ENCODE measurements at regions of chr9 and their contacts with region 1.

Region 1: GRCh38 chr9:132240753-132241493 is 79.1 kb downstream of the NTNG2 start:
- DNase-seq: peak; percentile 77
- ATAC-seq: peak; percentile 76
- H3K4me3 ChIP-seq: peak overlapping the region; percentile 65 to 73 (median 66); a peak in 4 of 6 replicates
- H3K27ac ChIP-seq: no peak overlapping the region
- H3K4me1 ChIP-seq: peaks cover 16% of the 10 kb centered on the region
- H3K27me3 ChIP-seq: peaks cover 16 to 70% of the 10 kb centered on the region in 2 experiments; a peak in 4 of 5 replicates
- CTCF ChIP-seq: 0 out of 2 replicates have a peak, but pooled peaks have one; percentile 1
- EP300 ChIP-seq: no peak
- POLR2A ChIP-seq: no peak
- RAD21 ChIP-seq: no peak

Region 2: DNA sequence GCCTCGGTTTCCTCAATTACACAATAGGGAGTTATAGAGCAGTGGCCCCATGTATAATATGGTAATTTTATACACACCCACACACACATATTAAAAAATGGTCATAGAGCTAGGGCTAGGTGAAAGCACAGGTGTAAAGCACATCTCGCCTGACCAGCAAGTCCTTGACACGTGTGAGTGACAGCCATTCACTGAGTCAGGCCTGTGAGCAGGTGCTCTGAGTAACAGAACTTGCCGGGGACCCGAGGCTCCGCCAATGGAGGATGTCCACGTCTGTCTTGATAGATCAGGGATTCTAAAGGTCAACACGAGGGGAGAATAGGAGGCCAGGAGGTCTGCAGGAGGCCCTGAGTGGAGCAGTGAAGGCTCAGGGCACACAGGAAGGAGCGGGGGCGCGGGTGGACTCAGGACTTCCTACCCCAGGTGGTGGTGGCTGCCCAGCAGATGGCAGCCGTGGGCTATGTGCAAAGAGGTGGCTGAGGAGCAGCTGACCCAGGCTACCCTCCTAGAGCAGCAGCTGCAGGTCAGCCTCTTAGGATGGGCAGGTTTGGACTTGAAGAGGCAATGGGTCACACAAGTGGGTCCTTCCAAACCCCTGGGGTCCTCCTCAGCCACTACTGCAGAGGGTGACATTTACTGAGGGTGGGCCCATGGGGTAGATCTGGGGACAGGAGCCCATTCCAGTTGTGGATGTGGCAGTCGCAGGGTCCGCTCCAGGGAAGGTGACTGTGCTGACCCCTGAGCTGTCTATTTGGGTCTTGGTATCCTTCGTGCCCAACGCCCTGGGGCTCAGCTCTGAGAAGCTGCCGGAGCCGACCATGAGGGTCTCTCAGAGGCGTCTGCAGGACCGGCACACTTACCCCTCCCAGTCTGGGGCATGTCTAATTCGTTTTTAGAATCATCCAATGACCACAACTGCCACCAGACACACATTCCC is 649.7 kb before region 1 on chr9:
- CTCF ChIA-PET with region 1: no interaction called
- POLR2A ChIA-PET with region 1: no interaction called
- in situ Hi-C with region 1: loop called (anchors 25 kb)
- intact Hi-C with region 1: no loop called
- DNase-seq: peak; percentile 61
- ATAC-seq: peak; percentile 94
- H3K4me3 ChIP-seq: no peak overlapping the region
- H3K27ac ChIP-seq: no peak overlapping the region
- H3K4me1 ChIP-seq: peaks cover 14% of the 10 kb centered on the region
- H3K27me3 ChIP-seq: no peaks in the 10 kb centered on the region
- CTCF ChIP-seq: peak; percentile 97
- EP300 ChIP-seq: no peak
- POLR2A ChIP-seq: no peak
- RAD21 ChIP-seq: peak; percentile 96

Region 3: DNA sequence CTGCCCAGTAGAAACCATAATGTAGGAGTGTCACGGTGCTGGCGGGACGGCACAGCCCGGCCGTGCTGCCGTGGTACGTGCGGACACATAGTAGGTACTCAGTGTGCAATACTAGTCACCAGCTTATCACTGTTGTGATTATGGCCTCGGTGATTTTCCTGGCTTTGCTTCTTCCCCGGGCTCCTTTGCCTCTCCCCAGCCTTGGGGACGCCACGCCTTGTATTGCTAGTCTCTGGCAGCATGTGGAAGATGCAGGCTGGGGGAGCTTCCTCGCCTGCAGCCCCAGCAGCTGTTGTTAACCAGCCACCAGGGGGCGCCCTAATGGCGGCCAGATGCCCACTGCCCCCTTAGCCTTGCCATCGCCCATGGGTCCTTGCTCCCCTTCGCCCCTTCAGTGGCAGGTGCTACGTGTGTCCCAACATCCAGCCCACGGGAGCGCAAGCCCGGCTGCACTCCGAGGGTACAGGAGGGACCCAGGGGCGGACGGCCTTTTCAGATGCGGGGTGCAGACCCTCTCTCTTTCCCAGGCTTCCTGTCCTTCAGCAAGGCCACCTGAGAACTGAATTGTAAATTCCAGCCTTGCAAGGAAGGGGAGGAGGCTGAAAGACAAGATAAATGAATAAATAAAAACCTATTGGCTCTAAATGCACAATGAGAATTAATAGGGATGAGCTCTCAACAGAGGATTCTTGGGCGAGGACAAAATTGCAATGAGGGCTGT is 71.1 kb before region 1 on chr9:
- CTCF ChIA-PET with region 1: interaction called, 12 read pairs
- POLR2A ChIA-PET with region 1: no interaction called
- in situ Hi-C with region 1: no loop called
- intact Hi-C with region 1: loop called (anchors 5 kb)
- DNase-seq: peak; percentile 26
- ATAC-seq: peak; percentile 77
- H3K4me3 ChIP-seq: no peak overlapping the region
- H3K27ac ChIP-seq: no peak overlapping the region
- H3K4me1 ChIP-seq: no peaks in the 10 kb centered on the region
- H3K27me3 ChIP-seq: peaks cover 13 to 74% of the 10 kb centered on the region in 2 experiments; a peak in 4 of 5 replicates
- CTCF ChIP-seq: peak; percentile 87
- EP300 ChIP-seq: no peak
- POLR2A ChIP-seq: no peak
- RAD21 ChIP-seq: peak; percentile 59